ENCODE measurements at regions of chr14 and their contacts with region 1.

Region 1: DNA sequence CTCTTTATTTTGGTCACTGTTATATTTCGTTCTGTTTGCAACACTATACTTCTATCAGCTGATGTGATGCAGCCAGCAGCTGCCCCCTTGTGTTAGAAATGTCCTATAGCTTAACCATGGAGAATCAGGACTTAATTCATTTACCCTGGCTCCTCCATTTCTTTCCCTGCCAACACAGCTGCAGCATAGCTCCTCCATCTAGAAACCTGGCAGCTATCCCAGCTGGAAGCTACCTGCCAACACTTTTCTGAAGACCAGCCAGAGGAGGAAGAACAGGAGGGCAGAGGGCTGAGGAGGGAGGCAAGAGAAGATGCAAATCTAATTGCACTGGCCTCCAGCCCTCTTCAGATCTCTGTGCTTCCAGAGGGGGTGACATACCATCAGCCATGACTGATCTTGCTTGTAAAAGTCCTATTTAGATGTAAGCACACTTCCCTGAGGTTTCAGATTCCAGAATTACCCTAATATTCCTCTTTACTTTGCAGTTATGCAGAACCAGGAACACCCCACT is 156.8 kb upstream of the TMEM260 start:
- DNase-seq: peak; percentile 52
- ATAC-seq: peak; percentile 94 to 96

Region 2: DNA sequence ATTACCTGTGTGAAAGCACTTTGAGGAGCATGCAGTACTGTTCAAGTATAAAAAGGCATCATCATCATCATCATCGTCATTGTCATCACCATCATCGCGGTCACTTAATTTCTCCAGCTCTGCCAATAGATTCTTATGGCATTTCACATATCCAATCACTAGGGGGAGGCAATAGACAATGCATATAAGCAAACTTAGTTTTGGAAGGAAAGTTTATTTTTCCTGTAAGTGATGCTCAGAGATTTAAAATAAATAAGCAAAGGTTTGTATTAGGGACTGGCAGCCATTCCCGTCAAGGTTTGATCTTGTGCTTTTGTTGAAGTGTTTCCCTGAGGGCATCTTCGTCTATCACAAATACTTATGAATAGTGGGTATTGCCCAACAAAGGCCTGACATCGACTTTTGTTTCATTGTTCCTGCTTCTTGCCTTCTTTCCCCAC is 715.4 kb before region 1 on chr14:
- intact Hi-C with region 1: loop called (anchors 5 to 10 kb)
- DNase-seq: no peak
- ATAC-seq: peak in 1 of 2 donors; percentile 34

Region 3: DNA sequence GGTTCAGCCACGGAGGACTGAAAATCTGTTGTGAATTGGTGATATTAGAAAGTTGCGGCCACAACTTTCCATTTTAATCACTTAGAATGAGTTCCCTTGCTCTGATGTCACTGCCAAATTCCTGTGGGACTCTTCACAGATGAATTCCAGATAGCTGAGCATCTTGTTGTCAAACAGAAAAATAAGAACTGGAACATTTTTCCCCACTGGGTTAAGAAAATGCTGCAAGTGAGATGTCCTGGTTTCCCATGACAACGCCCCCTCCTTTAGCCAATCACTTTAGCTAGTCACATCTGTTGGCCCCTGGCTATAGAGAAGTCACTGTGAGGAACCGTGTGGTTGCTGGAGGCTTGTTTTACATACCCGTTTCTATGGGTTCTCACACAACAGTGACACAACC is 706.9 kb before region 1 on chr14:
- intact Hi-C with region 1: loop called in 1 of 2 experiments (anchors 10 kb)
- DNase-seq: no peak
- ATAC-seq: peak; percentile 42 to 61

Region 4: GRCh38 chr14:56087671-56088471 is 334.9 kb before region 1 on chr14:
- intact Hi-C with region 1: no loop called
- DNase-seq: no peak
- ATAC-seq: no peak

Measured in left cardiac atrium (tissue), 4 donors.